Caco-2 (cell line): ENCODE measurements at regions of chr10 and their contacts with region 1.

Region 1: DNA sequence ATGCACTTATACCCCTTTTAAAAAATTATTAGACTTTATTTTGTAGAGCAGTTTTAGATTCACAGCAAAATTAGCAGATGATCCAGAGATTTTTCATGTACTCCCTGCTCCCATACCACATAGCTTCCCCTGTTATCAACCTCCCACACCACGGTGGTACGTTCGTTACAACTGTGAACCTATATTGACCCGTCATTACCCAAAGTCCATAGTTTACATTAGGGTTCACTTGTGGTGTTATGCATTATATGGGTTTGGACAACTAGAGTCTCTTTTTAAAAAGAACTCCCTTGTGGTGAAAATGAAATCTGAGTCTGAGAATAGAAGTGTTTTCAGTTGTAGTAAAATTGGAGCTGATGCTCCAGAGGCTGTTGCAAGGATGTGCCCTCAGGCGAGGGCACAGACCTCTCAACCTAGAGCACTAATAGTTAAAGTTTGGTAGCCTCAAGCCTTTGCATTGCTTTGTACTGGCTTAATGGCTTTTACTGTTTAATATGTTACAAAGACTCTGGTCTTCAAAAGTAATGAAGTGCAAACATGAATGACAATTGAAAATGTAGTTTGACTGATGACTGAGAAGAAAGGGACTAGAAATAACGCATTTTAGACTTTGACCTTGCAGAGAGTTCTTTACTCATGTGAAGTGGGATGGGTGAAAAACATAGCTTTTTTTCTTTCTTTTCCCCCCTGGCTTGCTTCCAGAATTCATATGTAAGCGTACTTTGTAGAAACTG is 30.6 kb upstream of the CSTF2T start:
- DNase-seq: peak; percentile 76 to 79
- H3K4me3 ChIP-seq: no peak overlapping the region
- H3K4me3 Mint-ChIP-seq: peak overlapping the region; percentile 38
- H3K27ac Mint-ChIP-seq: peak overlapping the region; percentile 85
- H3K4me1 ChIP-seq: peaks cover 29% of the 10 kb centered on the region
- H3K4me1 Mint-ChIP-seq: peaks cover 32% of the 10 kb centered on the region
- H3K27me3 ChIP-seq: no peaks in the 10 kb centered on the region
- H3K27me3 Mint-ChIP-seq: no peaks in the 10 kb centered on the region
- CTCF ChIP-seq: no peak

Region 2: GRCh38 chr10:51658000-51658399 is 72.0 kb before region 1 on chr10:
- CTCF ChIA-PET with region 1: no interaction called
- POLR2A ChIA-PET with region 1: no interaction called
- intact Hi-C with region 1: no loop called
- DNase-seq: no peak
- H3K4me3 ChIP-seq: no peak overlapping the region
- H3K4me3 Mint-ChIP-seq: no peak overlapping the region
- H3K27ac Mint-ChIP-seq: no peak overlapping the region
- H3K4me1 ChIP-seq: no peaks in the 10 kb centered on the region
- H3K4me1 Mint-ChIP-seq: no peaks in the 10 kb centered on the region
- H3K27me3 ChIP-seq: no peaks in the 10 kb centered on the region
- H3K27me3 Mint-ChIP-seq: peaks cover 12% of the 10 kb centered on the region
- CTCF ChIP-seq: no peak

Region 3: DNA sequence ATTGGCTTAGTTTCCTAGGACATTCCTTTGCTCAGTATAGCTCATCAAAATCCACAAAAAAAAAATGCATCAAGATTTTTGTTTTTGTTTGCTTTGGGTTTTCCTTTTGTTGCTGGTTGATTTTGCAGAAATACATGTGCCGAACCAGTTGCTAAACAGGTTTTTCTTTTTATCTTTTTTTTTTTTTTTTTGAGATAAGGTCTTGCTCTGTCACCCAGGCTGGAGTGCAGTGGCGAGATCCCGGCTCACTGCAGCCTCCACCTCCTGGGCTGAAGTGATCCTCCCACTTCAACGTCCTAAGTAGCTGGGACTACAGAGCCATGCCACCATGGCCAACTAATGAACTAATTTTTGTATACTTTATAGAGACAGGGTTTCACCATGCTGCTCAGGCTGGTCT is 38.9 kb before region 1 on chr10:
- CTCF ChIA-PET with region 1: no interaction called
- POLR2A ChIA-PET with region 1: interaction called, 3 read pairs
- intact Hi-C with region 1: loop called (anchors 1 kb)
- DNase-seq: peak; percentile 72 to 79
- H3K4me3 ChIP-seq: no peak overlapping the region
- H3K4me3 Mint-ChIP-seq: no peak overlapping the region
- H3K27ac Mint-ChIP-seq: no peak overlapping the region
- H3K4me1 ChIP-seq: peaks cover 18% of the 10 kb centered on the region
- H3K4me1 Mint-ChIP-seq: peaks cover 22% of the 10 kb centered on the region
- H3K27me3 ChIP-seq: no peaks in the 10 kb centered on the region
- H3K27me3 Mint-ChIP-seq: no peaks in the 10 kb centered on the region
- CTCF ChIP-seq: no peak

Region 4: GRCh38 chr10:51699475-51700227 is 30.3 kb before region 1 on chr10 and contains the start of gene CSTF2T:
- CTCF ChIA-PET with region 1: no interaction called
- POLR2A ChIA-PET with region 1: no interaction called
- intact Hi-C with region 1: loop called (anchors 1 kb)
- DNase-seq: peak; percentile 94 to 95
- H3K4me3 ChIP-seq: peak within 1 kb of the TSS; percentile 71
- H3K4me3 Mint-ChIP-seq: peak within 1 kb of the TSS; percentile 92
- H3K27ac Mint-ChIP-seq: peak within 1 kb of the TSS; percentile 99
- H3K4me1 ChIP-seq: peaks cover 8% of the 10 kb centered on the region
- H3K4me1 Mint-ChIP-seq: peaks cover 12% of the 10 kb centered on the region
- H3K27me3 ChIP-seq: no peaks in the 10 kb centered on the region
- H3K27me3 Mint-ChIP-seq: no peaks in the 10 kb centered on the region
- CTCF ChIP-seq: no peak
- total RNA-seq, gene CSTF2T: 48.8 and 51.2 TPM in 2 replicates

Region 5: GRCh38 chr10:51718804-51719291 is 11.1 kb before region 1 on chr10:
- CTCF ChIA-PET with region 1: interaction called, 3 read pairs
- POLR2A ChIA-PET with region 1: no interaction called
- intact Hi-C with region 1: loop called (anchors 1 kb)
- DNase-seq: peak; percentile 57 to 80
- H3K4me3 ChIP-seq: no peak overlapping the region
- H3K4me3 Mint-ChIP-seq: no peak overlapping the region
- H3K27ac Mint-ChIP-seq: peak overlapping the region; percentile 13
- H3K4me1 ChIP-seq: peaks cover 15% of the 10 kb centered on the region
- H3K4me1 Mint-ChIP-seq: peaks cover 15% of the 10 kb centered on the region
- H3K27me3 ChIP-seq: no peaks in the 10 kb centered on the region
- H3K27me3 Mint-ChIP-seq: no peaks in the 10 kb centered on the region
- CTCF ChIP-seq: no peak

Region 6: GRCh38 chr10:51770698-51771097 is 40.7 kb after region 1 on chr10:
- CTCF ChIA-PET with region 1: no interaction called
- POLR2A ChIA-PET with region 1: no interaction called
- intact Hi-C with region 1: loop called (anchors 2 kb)
- DNase-seq: peak in 1 of 2 experiments; percentile 52
- H3K4me3 ChIP-seq: no peak overlapping the region
- H3K4me3 Mint-ChIP-seq: no peak overlapping the region
- H3K27ac Mint-ChIP-seq: no peak overlapping the region
- H3K4me1 ChIP-seq: peaks cover 6% of the 10 kb centered on the region; the same call in 1 of the 2 replicates
- H3K4me1 Mint-ChIP-seq: peaks cover 6% of the 10 kb centered on the region
- H3K27me3 ChIP-seq: no peaks in the 10 kb centered on the region
- H3K27me3 Mint-ChIP-seq: no peaks in the 10 kb centered on the region
- CTCF ChIP-seq: no peak